Activated T-helper 1 cell treated with anti-CD3 and anti-CD28 coated beads, Interleukin-12 subunit alpha, Interleukin-12 subunit beta, Interleukin-2, Interleukin-4 antibody, amounts not matched to agents 30 ng/mL and 10 ng/mL and 1 ng/mL, durations not matched to agents 14 hours and 24 hours and 36 hours (primary cell): ENCODE measurements at regions of chr7 and their contacts with region 1.

Region 1: DNA sequence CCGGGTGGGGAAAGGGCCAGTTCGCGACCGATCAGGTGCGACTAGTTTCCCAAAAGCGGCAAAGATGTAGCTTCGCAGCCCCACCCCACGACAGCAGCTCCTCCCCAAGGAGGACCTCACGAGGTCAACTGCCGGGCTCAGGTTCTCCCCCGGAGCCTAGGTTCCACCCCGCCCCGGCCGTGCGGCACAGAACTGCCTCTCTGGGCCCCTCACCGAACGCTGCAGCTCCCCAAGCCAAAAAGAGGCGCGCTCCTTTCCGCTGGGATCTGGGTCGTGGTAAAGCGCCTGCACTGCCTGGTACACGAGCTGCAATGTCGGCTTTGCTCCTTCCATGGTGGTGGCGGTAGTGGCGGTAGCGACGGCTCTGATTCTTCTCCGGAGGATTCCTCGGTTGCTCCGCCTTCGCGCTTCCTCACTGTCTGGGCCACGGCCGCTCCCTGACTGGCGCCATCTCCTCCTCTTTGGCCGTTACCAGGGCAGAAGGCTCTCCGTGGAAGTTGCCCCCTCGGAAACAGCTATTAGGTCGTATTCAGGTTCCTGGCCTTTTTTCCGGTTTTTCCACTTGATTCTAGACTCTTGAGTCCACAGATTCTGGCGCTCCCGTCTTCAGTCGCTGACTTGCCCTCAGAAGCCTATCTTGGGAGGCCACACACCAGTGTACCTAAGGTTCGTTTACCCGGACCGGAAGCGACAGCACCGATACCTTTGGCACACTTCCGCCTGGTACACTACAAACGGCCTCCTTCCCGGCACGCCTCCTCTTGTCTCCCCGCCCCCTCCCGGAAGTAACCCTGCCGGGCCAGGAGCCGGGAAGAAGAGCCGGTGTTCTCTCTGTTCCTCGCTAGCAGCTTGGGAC is at the start of gene TNPO3:
- DNase-seq: peak; percentile 87
- H3K4me3 Mint-ChIP-seq: peak within 1 kb of the TSS; percentile 99
- H3K27ac Mint-ChIP-seq: peak within 1 kb of the TSS; percentile 99
- H3K4me1 Mint-ChIP-seq: peaks cover 28% of the 10 kb centered on the region
- H3K27me3 Mint-ChIP-seq: peaks cover 10% of the 10 kb centered on the region
- total RNA-seq, gene TNPO3: 52.8 and 53.2 TPM in 2 replicates

Region 2: GRCh38 chr7:128770233-128770632 is 284.4 kb before region 1 on chr7:
- intact Hi-C with region 1: no loop called
- DNase-seq: no peak
- H3K4me3 Mint-ChIP-seq: no peak overlapping the region
- H3K27ac Mint-ChIP-seq: no peak overlapping the region
- H3K4me1 Mint-ChIP-seq: no peaks in the 10 kb centered on the region
- H3K27me3 Mint-ChIP-seq: no peaks in the 10 kb centered on the region

Region 3: DNA sequence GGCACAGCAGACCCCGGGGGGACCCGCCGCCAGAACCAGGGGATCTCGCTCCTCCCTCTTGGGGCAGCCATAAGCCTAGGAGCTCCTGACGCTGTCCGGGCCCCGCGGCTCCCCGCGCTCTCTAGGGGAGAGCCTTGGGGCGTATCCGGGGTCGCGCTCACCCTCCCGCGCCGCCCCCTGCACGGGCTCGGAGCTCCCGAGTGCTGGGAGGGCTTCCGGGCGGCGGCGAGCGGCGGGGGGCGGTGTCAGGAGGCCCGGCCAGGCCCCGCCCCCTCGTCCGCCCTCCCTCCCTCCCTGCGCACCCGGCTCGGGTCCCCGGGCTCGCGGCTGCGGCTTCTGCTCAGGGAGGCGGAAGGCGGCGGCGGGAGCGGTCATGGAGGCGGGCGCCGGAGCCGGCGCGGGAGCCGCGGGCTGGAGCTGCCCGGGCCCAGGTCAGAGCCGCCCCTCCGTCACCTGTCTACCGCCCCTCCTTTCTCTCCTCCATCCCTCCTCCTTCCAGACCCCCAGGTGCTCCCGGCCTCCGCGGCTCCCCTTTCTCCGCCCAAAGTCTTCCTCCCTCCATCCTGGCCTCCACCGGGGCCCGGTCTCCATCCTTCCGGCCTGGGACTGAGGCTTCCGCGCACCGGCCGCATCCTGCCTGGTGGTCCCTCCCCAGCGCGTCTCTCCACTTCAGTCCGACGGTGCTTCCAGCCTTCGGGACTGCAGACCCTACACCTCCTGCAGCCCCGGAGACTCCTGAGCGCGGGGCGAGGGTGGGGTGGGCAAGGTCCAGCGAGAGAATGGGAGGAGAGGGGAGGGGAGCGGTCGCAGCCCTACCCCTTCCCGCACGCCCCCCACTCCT is 263.3 kb before region 1 on chr7:
- intact Hi-C with region 1: loop called (anchors 1 kb)
- DNase-seq: peak; percentile 70
- H3K4me3 Mint-ChIP-seq: peak overlapping the region; percentile 78
- H3K27ac Mint-ChIP-seq: no peak overlapping the region
- H3K4me1 Mint-ChIP-seq: peaks cover 4% of the 10 kb centered on the region
- H3K27me3 Mint-ChIP-seq: peaks cover 29% of the 10 kb centered on the region

Region 4: GRCh38 chr7:128963327-128963757 is 91.3 kb before region 1 on chr7:
- intact Hi-C with region 1: loop called (anchors 1 kb)
- DNase-seq: peak; percentile 34
- H3K4me3 Mint-ChIP-seq: peak overlapping the region; percentile 57
- H3K27ac Mint-ChIP-seq: peak overlapping the region; percentile 72
- H3K4me1 Mint-ChIP-seq: peaks cover 43% of the 10 kb centered on the region
- H3K27me3 Mint-ChIP-seq: no peaks in the 10 kb centered on the region

Region 5: GRCh38 chr7:129041142-129042085 is 13.3 kb before region 1 on chr7:
- intact Hi-C with region 1: loop called (anchors 1 kb)
- DNase-seq: no peak
- H3K4me3 Mint-ChIP-seq: no peak overlapping the region
- H3K27ac Mint-ChIP-seq: peak overlapping the region; percentile 53
- H3K4me1 Mint-ChIP-seq: peaks cover 46% of the 10 kb centered on the region
- H3K27me3 Mint-ChIP-seq: no peaks in the 10 kb centered on the region

Region 6: GRCh38 chr7:129122751-129123509 is 68.3 kb after region 1 on chr7:
- intact Hi-C with region 1: loop called (anchors 1 kb)
- DNase-seq: peak; percentile 14
- H3K4me3 Mint-ChIP-seq: peak overlapping the region; percentile 22
- H3K27ac Mint-ChIP-seq: peak overlapping the region; percentile 85
- H3K4me1 Mint-ChIP-seq: peaks cover 39% of the 10 kb centered on the region
- H3K27me3 Mint-ChIP-seq: peaks cover 15% of the 10 kb centered on the region

Region 7: GRCh38 chr7:129611246-129612111 is 556.8 kb after region 1 on chr7 and contains the start of gene NRF1:
- intact Hi-C with region 1: loop called (anchors 1 kb)
- DNase-seq: peak; percentile 89
- H3K4me3 Mint-ChIP-seq: peak within 1 kb of the TSS; percentile 98
- H3K27ac Mint-ChIP-seq: peak within 1 kb of the TSS; percentile 99
- H3K4me1 Mint-ChIP-seq: peaks cover 48% of the 10 kb centered on the region
- H3K27me3 Mint-ChIP-seq: no peaks in the 10 kb centered on the region
- total RNA-seq, gene NRF1: 22.8 and 25.9 TPM in 2 replicates